ENCODE measurements at regions of chr9 and their contacts with region 1.

Region 1: GRCh38 chr9:76441551-76442322 is 17.2 kb upstream of the GCNT1 start:
- DNase-seq: no peak
- ATAC-seq: no peak

Region 2: GRCh38 chr9:76255781-76256455 is 185.8 kb before region 1 on chr9:
- intact Hi-C with region 1: no loop called
- DNase-seq: peak; percentile 71
- ATAC-seq: peak; percentile 98

Region 3: GRCh38 chr9:76403352-76403751 is 38.4 kb before region 1 on chr9:
- intact Hi-C with region 1: no loop called
- DNase-seq: no peak
- ATAC-seq: peak; percentile 88

Region 4: DNA sequence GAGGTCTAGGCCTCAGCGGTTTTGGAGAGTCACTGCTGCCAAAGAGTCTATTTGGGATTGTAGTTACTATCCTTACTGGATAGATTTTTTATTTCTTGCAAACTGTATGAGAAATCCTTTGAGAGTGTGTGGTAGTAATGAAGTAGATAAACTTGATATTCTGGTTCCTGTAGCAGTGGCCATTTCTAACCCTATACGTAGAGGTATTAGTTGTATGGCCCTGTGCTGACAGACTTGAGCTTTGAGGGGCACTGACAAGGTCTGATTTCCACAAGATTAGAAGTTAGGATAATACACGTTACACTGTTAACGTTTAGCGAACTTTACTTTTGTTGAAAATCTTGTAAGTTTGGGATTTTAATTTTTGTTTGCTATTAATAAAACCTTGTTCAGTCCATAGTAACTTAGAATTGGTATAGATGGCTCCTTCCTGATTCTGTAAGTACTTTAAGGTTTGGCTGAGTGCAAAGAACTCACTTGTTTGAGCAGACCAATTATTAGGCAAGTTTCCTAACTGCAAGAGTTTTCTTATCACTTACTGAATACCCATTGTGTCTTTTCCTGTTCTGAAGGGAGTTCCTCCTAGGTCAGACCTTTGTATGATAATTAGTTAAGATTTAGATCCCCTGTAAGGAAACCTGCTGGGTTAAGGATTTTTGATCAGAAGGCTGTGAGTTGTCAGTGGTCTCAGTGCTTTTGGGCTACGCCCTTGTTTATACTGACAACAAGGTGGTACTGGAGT is 48.7 kb after region 1 on chr9:
- intact Hi-C with region 1: no loop called
- DNase-seq: no peak
- ATAC-seq: no peak

Region 5: GRCh38 chr9:76545191-76545590 is 103.5 kb after region 1 on chr9:
- intact Hi-C with region 1: no loop called
- DNase-seq: no peak
- ATAC-seq: no peak

Region 6: GRCh38 chr9:76658535-76659231 is 216.9 kb after region 1 on chr9:
- intact Hi-C with region 1: loop called (anchors 10 kb)
- DNase-seq: no peak
- ATAC-seq: peak; percentile 90

Region 7: DNA sequence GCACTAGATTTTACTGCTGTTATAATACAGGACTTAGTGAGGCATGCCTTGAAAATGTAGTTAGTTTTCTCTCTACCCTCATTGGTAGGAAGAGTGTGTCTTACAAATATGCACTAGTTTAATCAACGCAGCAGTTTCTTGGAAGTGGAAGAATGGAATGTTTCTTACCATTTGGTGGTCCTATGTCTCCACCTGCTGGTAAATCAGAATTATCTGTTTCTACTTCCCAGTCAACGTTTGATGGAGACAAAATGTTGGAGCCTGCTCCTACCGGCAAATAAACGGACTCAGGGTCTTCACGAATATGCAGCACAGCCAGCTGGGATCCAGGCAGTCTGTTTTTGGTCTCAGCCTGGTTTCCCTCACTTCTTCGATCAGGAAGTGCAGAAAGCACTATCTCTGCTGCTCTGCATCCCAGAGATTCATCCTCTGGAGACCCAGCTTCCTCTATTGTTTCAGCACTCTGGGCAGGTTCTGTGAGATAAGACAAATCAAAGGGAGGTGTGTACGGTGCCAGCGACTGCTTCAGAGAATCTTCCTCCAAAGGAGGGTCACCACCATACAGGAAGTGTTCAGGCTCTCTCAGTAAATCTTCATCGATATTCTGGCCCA is 263.0 kb after region 1 on chr9:
- intact Hi-C with region 1: loop called (anchors 10 kb)
- DNase-seq: no peak
- ATAC-seq: peak; percentile 71

Measured in sciatic nerve (tissue), 2 donors.